ENCODE measurements at regions of chr20 and their contacts with region 1.

Region 1: GRCh38 chr20:6074145-6074561 is 20.3 kb upstream of the LRRN4 start:
- DNase-seq: peak; percentile 9
- H3K4me3 Mint-ChIP-seq: no peak overlapping the region
- H3K27ac Mint-ChIP-seq: no peak overlapping the region
- H3K4me1 Mint-ChIP-seq: peaks cover 2% of the 10 kb centered on the region
- H3K27me3 Mint-ChIP-seq: no peaks in the 10 kb centered on the region

Region 2: DNA sequence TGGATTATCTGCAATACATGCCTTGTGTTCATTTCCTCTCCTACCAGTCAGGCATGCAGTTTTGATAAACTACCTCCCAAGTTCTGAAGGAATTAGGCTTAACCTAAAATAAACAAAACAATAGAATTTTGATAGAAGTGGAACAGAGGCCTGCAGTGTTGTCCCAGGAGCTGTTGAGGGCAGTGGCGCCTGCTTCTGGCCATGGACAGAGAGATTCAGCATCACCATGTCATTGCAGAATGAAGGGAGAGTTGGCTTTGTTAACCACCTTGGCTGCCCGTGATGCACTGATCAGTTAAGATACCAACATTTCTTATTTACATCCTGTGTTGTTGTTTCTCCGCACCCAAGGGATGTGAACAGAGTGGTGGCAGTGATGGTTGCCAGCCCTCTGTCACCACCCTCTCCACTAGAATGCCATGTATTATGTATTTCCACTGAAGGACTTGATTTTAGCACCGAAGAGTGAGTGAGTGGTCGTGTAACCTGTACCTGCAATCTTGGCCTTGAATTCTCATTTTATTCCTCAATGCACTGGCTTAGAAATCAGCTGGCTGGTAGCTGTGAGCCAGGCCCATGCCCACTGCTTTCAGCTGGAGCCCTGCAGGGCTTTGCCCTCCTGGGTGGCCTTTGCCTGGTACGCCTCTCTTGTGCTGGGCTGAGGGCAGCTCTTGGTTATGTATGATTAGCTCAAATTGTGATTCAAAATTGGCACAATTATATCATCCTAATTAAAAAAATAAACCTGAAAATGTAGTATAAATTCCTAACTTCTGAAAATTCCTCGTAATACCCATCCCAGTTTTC is 267.5 kb before region 1 on chr20:
- CTCF ChIA-PET with region 1: no interaction called
- intact Hi-C with region 1: loop called (anchors 5 kb)
- DNase-seq: peak; percentile 18
- H3K4me3 Mint-ChIP-seq: no peak overlapping the region
- H3K27ac Mint-ChIP-seq: no peak overlapping the region
- H3K4me1 Mint-ChIP-seq: peaks cover 20% of the 10 kb centered on the region
- H3K27me3 Mint-ChIP-seq: no peaks in the 10 kb centered on the region

Region 3: DNA sequence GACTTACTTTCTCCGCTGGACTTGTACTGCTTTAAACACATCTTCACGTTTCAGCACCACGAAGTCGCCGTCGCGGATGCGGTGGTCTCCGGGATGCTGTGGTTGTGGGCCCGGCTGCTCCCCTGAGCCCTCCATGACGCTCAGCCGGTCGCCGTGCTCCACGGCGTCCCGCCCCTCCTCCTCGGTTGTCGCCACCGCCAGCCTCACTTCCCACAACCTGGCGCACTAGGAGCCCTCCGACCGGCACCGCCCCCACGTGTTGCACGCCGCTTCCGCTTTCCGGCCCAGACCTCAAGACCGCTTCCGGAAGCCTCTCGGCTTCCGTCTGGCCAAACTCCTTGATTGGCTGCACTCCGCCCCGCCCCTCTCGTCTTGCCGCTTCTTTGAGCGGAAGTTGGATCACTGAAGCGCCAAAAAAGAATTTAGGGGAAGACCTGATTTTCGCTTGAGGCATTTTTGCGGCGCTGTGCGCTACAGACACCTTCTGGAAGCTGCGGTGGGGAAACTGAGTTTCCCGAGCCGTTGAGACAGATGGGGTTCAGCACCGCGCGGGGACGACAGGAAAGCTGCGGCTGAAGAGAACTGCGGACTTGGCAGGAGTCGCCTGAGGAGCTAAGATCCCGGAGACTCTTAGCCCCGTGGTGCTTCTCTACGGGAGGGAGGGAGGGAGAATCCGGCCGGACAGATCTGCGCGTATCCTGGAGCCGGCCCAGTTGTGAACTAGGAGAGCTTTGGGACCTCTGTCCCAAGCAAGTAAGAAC is 123.7 kb before region 1 on chr20 and contains the starts of genes MCM8 and TRMT6:
- CTCF ChIA-PET with region 1: no interaction called
- intact Hi-C with region 1: loop called (anchors 5 kb)
- DNase-seq: peak; percentile 98
- H3K4me3 Mint-ChIP-seq: peak within 1 kb of the TSS; percentile 97
- H3K27ac Mint-ChIP-seq: peak within 1 kb of the TSS; percentile 95
- H3K4me1 Mint-ChIP-seq: peaks cover 61% of the 10 kb centered on the region
- H3K27me3 Mint-ChIP-seq: no peaks in the 10 kb centered on the region
- total RNA-seq, gene MCM8: 49.6 to 50.3 TPM
- total RNA-seq, gene TRMT6: 11.5 to 11.8 TPM

Region 4: DNA sequence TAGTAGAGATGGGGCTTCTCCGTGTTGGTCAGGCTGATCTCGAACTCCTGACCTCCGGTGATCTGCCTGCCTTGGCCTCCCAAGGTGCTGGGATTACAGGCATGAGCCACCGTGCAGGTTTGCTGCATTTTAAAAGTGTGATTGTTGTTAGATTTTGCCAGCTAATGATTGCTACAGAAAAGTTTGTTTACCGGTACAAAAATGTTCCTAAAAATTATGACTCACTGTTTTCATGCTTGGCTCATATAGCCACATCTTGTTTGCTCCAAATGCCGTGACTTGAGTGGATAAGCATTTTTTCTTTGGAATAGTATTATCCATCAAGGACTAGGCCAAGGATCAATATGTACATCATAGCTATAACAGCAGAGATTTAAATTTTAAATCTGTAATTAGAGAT is 44.6 kb before region 1 on chr20:
- CTCF ChIA-PET with region 1: no interaction called
- intact Hi-C with region 1: no loop called
- DNase-seq: no peak
- H3K4me3 Mint-ChIP-seq: no peak overlapping the region
- H3K27ac Mint-ChIP-seq: no peak overlapping the region
- H3K4me1 Mint-ChIP-seq: peaks cover 40% of the 10 kb centered on the region
- H3K27me3 Mint-ChIP-seq: no peaks in the 10 kb centered on the region